CD14-positive monocyte (primary cell): ENCODE measurements at regions of chr3 and their contacts with region 1.

Region 1: GRCh38 chr3:57086201-57086600 is 25.7 kb downstream of the SPATA12 start:
- DNase-seq: no peak
- H3K4me3 ChIP-seq: no peak overlapping the region
- H3K4me3 Mint-ChIP-seq: no peak overlapping the region
- H3K27ac ChIP-seq: no peak overlapping the region
- H3K27ac Mint-ChIP-seq: no peak overlapping the region
- H3K4me1 ChIP-seq: no peaks in the 10 kb centered on the region
- H3K4me1 Mint-ChIP-seq: peaks cover 5% of the 10 kb centered on the region
- H3K27me3 ChIP-seq: peaks cover 0 to 2% of the 10 kb centered on the region in 2 donors
- H3K27me3 Mint-ChIP-seq: peaks cover 0 to 10% (median 5%) of the 10 kb centered on the region in 3 donors
- CTCF ChIP-seq: no peak

Region 2: DNA sequence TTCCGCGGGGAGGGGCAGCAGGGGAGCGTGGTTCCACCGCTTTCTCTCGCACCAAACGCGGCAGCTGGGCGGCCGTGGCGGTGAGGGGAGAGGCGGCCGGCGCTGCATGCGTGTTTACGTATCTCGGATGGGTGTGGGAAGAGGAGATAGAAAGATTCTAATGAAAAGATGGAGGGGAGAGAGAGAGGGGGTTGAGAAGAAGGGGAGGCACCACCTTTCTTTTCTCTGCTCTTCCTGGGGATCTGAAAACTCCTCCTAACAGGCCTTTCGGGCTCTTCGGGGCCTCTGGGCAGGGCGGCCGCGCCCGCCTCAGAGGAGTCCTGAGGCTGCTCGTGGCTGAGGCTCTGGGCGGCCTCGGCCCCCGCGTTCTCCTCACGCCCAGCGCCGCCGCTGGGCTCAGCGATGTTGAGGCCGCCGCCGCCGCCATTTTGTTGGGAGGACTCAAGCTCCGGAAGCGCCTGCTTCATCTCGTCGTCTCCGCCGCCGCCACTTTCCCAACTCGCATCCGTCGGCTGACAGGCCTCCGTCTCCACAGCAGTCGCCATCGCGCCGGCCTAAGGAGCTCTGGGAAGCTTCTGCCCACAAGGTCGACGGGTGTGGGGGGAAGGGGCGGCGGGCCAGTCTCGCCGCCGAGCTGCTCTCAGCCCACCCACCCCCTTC is 403.6 kb before region 1 on chr3:
- intact Hi-C with region 1: loop called in 1 of 2 experiments (anchors 10 kb)
- DNase-seq: peak; percentile 62 to 73 (median 67)
- H3K4me3 ChIP-seq: peak overlapping the region; percentile 58 to 92 (median 72)
- H3K4me3 Mint-ChIP-seq: peak overlapping the region; percentile 92 to 95
- H3K27ac ChIP-seq: peak overlapping the region; percentile 93 to 95
- H3K27ac Mint-ChIP-seq: peak overlapping the region; percentile 92 to 97 (median 96)
- H3K4me1 ChIP-seq: peaks cover 20 to 37% of the 10 kb centered on the region in 2 donors
- H3K4me1 Mint-ChIP-seq: peaks cover 34% of the 10 kb centered on the region
- H3K27me3 ChIP-seq: no peaks in the 10 kb centered on the region
- H3K27me3 Mint-ChIP-seq: peaks cover 0 to 3% (median 0%) of the 10 kb centered on the region in 3 donors
- CTCF ChIP-seq: no peak

Region 3: DNA sequence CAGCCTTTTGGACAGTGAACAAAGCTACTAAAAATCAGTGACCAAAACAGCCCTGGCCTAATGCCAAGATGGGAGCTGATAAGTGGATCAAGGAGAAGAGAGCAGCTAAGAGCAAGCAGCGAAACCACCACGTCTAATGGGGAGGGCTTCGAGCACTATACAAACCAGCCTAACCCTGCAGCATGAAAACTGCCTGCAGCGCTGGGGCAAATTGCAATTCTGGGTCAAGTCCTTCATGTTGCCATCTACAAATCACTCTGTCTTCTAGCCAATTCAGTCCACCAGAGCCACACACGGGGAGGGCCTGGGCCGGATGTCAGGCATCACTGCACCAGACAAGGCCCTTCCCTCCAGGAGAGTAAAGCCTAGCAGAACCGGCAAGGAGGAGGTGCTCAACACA is 56.3 kb before region 1 on chr3:
- intact Hi-C with region 1: loop called in 1 of 2 experiments (anchors 10 kb)
- DNase-seq: no peak
- H3K4me3 ChIP-seq: no peak overlapping the region
- H3K4me3 Mint-ChIP-seq: no peak overlapping the region
- H3K27ac ChIP-seq: no peak overlapping the region
- H3K27ac Mint-ChIP-seq: peak overlapping the region in 1 of 7 donors; percentile 76
- H3K4me1 ChIP-seq: no peaks in the 10 kb centered on the region
- H3K4me1 Mint-ChIP-seq: peaks cover 9% of the 10 kb centered on the region
- H3K27me3 ChIP-seq: no peaks in the 10 kb centered on the region
- H3K27me3 Mint-ChIP-seq: peaks cover 0 to 3% (median 0%) of the 10 kb centered on the region in 3 donors
- CTCF ChIP-seq: no peak

Region 4: DNA sequence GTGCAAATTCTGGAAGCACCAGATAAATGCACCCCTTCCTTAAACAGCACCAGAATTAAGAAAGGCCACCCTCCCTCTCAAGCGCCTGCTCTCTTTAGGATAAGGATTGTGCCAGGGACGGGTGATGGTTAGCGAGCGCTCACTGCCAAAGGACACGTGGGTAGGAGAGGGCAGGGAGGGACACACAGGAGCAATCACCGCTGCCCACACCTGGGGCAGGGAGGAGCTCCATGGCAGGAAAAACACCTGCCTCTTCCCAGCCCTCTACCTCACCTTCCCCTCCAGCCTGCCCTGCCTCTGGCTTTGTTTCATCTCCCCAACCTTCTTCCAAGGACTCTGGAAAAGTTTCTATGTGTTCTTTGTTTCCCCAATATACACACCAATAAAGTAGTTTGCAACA is 33.1 kb before region 1 on chr3:
- intact Hi-C with region 1: loop called in 1 of 2 experiments (anchors 5 kb)
- DNase-seq: no peak
- H3K4me3 ChIP-seq: no peak overlapping the region
- H3K4me3 Mint-ChIP-seq: no peak overlapping the region
- H3K27ac ChIP-seq: no peak overlapping the region
- H3K27ac Mint-ChIP-seq: no peak overlapping the region
- H3K4me1 ChIP-seq: no peaks in the 10 kb centered on the region
- H3K4me1 Mint-ChIP-seq: peaks cover 4% of the 10 kb centered on the region
- H3K27me3 ChIP-seq: no peaks in the 10 kb centered on the region
- H3K27me3 Mint-ChIP-seq: peaks cover 1 to 6% (median 3%) of the 10 kb centered on the region in 3 donors
- CTCF ChIP-seq: no peak

Region 5: GRCh38 chr3:57199895-57200297 is 113.7 kb after region 1 on chr3 and contains the start of gene HESX1:
- intact Hi-C with region 1: no loop called
- DNase-seq: no peak
- H3K4me3 ChIP-seq: no peak within 1 kb of the TSS
- H3K4me3 Mint-ChIP-seq: no peak within 1 kb of the TSS
- H3K27ac ChIP-seq: no peak within 1 kb of the TSS
- H3K27ac Mint-ChIP-seq: no peak within 1 kb of the TSS
- H3K4me1 ChIP-seq: peaks cover 0 to 3% of the 10 kb centered on the region in 2 donors
- H3K4me1 Mint-ChIP-seq: no peaks in the 10 kb centered on the region
- H3K27me3 ChIP-seq: no peaks in the 10 kb centered on the region
- H3K27me3 Mint-ChIP-seq: peaks cover 0 to 4% (median 0%) of the 10 kb centered on the region in 3 donors
- CTCF ChIP-seq: no peak
- polyA plus RNA-seq, gene HESX1: 0.22 to 0.83 (median 0.46) TPM